IMR-90 (cell line): ENCODE measurements at regions of chr7 and their contacts with region 1.

Region 1: GRCh38 chr7:121020652-121021051 is 32.1 kb downstream of the CPED1 start:
- DNase-seq: peak; percentile 72
- ATAC-seq: peak; percentile 38; the same call in 1 of the 2 replicates
- H3K4me3 ChIP-seq: no peak overlapping the region
- H3K27ac ChIP-seq: peak overlapping the region; percentile 2; the same call in 1 of the 2 replicates
- H3K4me1 ChIP-seq: peaks cover 16% of the 10 kb centered on the region
- H3K27me3 ChIP-seq: no peaks in the 10 kb centered on the region
- CTCF ChIP-seq: no peak
- POLR2A ChIP-seq: no peak
- RAD21 ChIP-seq: no peak

Region 2: GRCh38 chr7:121006711-121007315 is 13.8 kb before region 1 on chr7:
- CTCF ChIA-PET with region 1: interaction called, 4 read pairs
- POLR2A ChIA-PET with region 1: no interaction called
- dilution Hi-C with region 1: no loop called
- in situ Hi-C with region 1: no loop called
- intact Hi-C with region 1: loop called (anchors 1 kb)
- DNase-seq: no peak
- ATAC-seq: peak; percentile 43; the same call in 1 of the 2 replicates
- H3K4me3 ChIP-seq: no peak overlapping the region
- H3K27ac ChIP-seq: no peak overlapping the region
- H3K4me1 ChIP-seq: peaks cover 18% of the 10 kb centered on the region
- H3K27me3 ChIP-seq: no peaks in the 10 kb centered on the region
- CTCF ChIP-seq: no peak
- POLR2A ChIP-seq: no peak
- RAD21 ChIP-seq: no peak